HEK293 (cell line): ENCODE measurements at regions of chr1 and their contacts with region 1.

Region 1: GRCh38 chr1:184222652-184223052 is 164.2 kb upstream of the C1orf21 start:
- H3K4me3 ChIP-seq: peak overlapping the region; percentile 16; the same call in 1 of the 2 replicates
- H3K27ac ChIP-seq: no peak overlapping the region
- H3K4me1 ChIP-seq: no peaks in the 10 kb centered on the region
- CTCF ChIP-seq: peak; percentile 87

Region 2: GRCh38 chr1:184190616-184191015 is 32.0 kb before region 1 on chr1:
- CTCF ChIA-PET with region 1: no interaction called
- POLR2A ChIA-PET with region 1: no interaction called
- H3K4me3 ChIP-seq: no peak overlapping the region
- H3K27ac ChIP-seq: no peak overlapping the region
- H3K4me1 ChIP-seq: no peaks in the 10 kb centered on the region
- CTCF ChIP-seq: no peak

Region 3: DNA sequence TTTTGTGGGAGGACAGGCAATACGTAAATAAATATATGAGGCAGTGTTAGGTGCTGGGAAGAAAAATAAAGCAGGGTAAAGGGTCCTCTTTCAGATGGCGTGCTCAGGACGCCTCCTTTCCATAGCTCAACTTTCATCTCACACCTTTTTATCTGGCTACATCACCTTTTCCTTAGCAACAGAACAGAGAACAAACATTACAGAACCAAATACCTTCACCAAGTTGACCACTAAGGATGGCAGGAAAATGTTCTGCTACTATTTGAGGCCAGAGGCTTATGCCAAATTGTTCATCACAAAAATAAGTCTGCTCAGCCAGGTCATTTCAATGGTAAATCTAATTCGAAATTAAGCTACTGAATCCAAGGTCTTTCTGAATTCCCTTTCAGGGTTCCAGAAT is 14.9 kb after region 1 on chr1:
- CTCF ChIA-PET with region 1: interaction called, 12 read pairs
- POLR2A ChIA-PET with region 1: no interaction called
- H3K4me3 ChIP-seq: no peak overlapping the region
- H3K27ac ChIP-seq: no peak overlapping the region
- H3K4me1 ChIP-seq: no peaks in the 10 kb centered on the region
- CTCF ChIP-seq: no peak